ENCODE measurements at regions of chr20 and their contacts with region 1.

Region 1: DNA sequence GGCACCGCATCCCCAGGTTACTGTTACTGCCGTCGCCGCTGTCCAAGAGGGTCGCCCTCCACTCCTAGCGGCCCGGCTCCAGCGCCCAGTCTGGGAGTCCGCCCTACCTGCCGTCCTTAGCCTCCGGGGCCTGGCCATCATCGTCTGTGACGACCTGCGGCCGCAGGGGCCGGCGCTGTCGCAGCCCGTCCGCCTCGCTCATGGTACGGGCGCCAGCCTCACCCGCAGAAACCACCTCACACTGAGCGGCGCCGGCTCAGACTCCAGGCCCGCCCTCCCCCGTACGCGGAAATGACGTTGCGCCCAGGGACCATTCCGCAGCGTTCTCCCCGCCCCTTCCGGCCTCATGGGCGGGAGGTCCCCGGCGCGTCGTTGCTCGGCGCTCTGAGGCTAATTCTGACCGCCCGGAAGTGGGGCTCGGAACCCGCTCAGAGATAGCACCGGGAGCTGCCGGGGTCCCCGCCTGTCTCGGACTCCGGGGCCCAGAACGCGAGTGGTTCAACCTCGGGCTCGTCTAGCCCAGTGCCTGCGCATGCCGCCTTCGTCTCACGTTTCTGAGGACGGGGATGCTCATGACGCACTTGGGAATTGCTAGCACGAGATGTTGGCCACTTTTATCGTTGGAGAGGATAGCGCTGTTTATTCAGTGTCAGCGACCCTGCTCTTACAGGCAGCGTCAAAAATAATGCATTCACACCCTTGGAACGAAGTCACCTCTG is at the start of gene APMAP:
- DNase-seq: peak; percentile 96 to 98 (median 96)
- H3K4me3 ChIP-seq: peak within 1 kb of the TSS; percentile 93
- H3K27ac ChIP-seq: peak within 1 kb of the TSS; percentile 54 to 92
- H3K4me1 ChIP-seq: peaks cover 3% of the 10 kb centered on the region
- H3K27me3 ChIP-seq: no peaks in the 10 kb centered on the region
- CTCF ChIP-seq: no peak
- EP300 ChIP-seq: no peak
- POLR2A ChIP-seq: peak; percentile 96
- total RNA-seq, gene APMAP: 23.5 to 59.0 (median 45.3) TPM

Region 2: DNA sequence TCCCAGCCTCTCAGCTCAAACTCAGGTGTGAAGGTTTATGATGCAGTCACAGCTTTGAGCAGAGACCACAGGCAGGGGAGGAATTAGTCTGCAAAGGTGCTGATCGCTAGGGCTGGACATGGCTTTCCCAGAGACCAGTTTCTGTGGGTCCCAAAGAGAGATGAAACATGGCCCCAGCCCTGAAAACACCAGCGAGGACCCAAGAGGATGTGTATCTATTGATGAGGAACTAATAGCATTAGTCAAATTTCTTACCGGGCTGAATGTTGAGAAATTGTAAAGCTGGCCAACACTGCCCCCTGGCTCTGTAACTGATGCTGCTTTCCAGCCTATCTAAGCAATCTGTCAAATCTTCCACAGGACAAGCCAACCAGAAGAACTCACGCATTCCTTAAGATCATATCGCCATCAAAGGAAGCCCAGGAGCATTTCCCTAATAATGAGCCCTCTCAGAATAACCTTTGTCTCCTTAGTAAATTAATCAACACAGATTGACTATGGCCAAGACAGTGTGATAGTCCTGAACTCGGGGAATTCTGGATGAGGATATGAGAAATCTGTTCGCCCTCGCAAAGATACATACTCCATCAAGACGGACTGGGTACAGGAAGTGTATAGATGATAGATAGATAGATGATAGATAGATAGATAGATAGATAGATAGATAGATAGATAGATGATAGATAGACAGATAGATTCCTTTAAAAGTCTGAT is 73.1 kb after region 1 on chr20:
- intact Hi-C with region 1: loop called in 3 of 4 experiments (anchors 1 to 2 kb)
- DNase-seq: peak; percentile 46 to 74 (median 63)
- H3K4me3 ChIP-seq: no peak overlapping the region
- H3K27ac ChIP-seq: no peak overlapping the region
- H3K4me1 ChIP-seq: no peaks in the 10 kb centered on the region
- H3K27me3 ChIP-seq: no peaks in the 10 kb centered on the region
- CTCF ChIP-seq: peak; percentile 53 to 88 (median 82)
- EP300 ChIP-seq: no peak
- POLR2A ChIP-seq: no peak

Region 3: GRCh38 chr20:25195014-25195961 is 202.6 kb after region 1 on chr20 and contains the start of gene ENTPD6:
- intact Hi-C with region 1: loop called in 2 of 4 experiments (anchors 5 to 10 kb)
- DNase-seq: peak; percentile 92 to 98 (median 96)
- H3K4me3 ChIP-seq: peak within 1 kb of the TSS; percentile 77
- H3K27ac ChIP-seq: peak within 1 kb of the TSS; percentile 58 to 75
- H3K4me1 ChIP-seq: peaks cover 22% of the 10 kb centered on the region
- H3K27me3 ChIP-seq: no peaks in the 10 kb centered on the region
- CTCF ChIP-seq: no peak
- EP300 ChIP-seq: no peak
- POLR2A ChIP-seq: peak; percentile 82
- total RNA-seq, gene ENTPD6: 34.9 to 73.8 (median 66.5) TPM

Region 4: DNA sequence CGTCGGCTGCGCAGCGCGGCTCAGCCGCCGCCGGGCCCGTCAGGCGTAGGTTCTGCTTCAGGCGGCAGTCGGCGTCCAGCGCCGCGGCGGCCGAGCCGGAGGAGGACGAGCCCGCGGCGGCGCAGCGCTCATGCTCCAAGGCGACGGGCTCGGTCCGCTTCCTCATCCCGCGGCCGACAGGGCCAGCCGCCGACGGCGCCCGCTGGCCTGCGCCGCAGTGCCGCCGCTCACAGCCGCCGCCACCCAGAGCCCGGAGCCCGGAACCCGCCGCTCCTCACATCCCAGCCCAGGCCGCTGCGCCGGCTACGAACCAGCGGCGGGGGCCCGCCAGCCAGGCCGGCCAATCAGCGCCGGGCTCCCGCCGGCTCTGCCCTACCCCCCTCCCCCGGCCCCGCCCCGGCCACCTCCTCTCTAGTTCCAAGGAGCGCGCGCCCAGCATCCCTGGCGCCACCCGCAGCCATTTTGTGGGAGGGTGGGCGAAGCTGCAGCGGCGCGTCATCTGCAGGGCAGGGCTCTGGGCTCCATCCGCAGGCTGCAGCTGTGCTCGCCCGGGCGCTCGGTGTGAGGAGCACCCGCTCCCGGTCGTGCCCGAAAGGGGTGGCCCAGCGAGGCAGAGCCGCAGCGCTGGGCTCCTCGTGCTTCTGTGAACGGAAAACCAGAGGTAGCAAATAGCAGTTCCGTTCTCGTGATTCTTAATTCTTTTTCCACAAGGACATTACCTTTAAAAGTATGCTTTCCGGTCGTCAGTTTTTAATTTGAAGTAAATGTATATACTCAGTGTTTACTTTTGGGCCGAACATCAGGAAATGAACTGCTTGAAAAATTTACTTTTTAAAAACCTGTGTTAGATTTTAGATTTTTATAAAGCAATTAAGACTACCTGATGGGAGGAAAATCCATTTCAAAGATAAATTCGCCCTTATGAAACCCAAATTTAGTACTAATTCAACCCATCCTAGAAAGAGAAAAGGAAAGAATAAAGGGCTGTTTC is 398.2 kb after region 1 on chr20 and contains the start of gene ABHD12:
- intact Hi-C with region 1: loop called in 1 of 4 experiments (anchors 2 kb)
- DNase-seq: peak; percentile 93 to 96 (median 94)
- H3K4me3 ChIP-seq: peak within 1 kb of the TSS; percentile 81
- H3K27ac ChIP-seq: peak within 1 kb of the TSS; percentile 59 to 90
- H3K4me1 ChIP-seq: peaks cover 3% of the 10 kb centered on the region
- H3K27me3 ChIP-seq: no peaks in the 10 kb centered on the region
- CTCF ChIP-seq: peak in 1 of 3 donors; percentile 11
- EP300 ChIP-seq: no peak
- POLR2A ChIP-seq: peak; percentile 25
- total RNA-seq, gene ABHD12: 15.0 to 46.9 (median 37.6) TPM

Region 5: DNA sequence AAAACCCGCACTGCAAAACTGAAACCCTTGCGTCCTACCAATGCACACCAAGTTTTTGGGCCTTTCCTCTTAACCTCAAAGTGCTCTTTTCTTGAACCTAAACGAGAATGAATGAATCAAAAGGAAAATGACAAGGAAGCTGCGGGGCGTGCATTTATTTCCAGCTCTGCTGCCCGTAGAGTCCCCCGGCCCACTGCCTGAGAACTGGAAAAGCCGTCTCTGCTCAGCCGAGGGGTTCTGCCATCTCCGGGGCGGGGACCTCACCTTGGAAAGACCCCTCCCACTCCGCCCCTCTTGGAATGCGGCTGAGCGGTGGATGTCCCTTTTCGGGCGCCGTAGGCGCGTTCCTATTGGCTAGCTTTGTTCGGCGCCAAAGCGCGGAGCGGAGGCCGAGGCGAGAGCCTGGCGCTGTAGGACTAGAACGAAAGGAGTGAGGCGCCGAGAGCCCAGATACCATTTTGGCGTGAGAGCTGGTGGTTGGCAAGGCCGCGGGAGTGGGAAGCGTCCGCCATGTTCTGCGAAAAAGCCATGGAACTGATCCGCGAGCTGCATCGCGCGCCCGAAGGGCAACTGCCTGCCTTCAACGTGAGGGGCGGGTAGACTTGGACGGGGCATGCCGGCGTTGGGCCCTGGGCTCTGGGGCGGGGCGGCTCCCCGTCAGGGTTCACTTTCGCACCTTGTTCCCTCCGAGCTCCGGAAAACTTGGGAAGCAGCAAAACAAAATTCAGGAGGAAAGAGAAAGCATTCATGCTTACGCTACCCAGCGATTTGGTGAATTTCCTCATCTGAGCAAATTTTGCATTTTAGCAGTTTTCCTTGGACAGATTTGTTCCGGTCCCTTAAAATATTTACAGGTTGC is 414.9 kb after region 1 on chr20 and contains the start of gene GINS1:
- intact Hi-C with region 1: loop called in 2 of 4 experiments (anchors 5 to 10 kb)
- DNase-seq: peak; percentile 70 to 89 (median 83)
- H3K4me3 ChIP-seq: peak within 1 kb of the TSS; percentile 48
- H3K27ac ChIP-seq: no peak within 1 kb of the TSS
- H3K4me1 ChIP-seq: no peaks in the 10 kb centered on the region
- H3K27me3 ChIP-seq: no peaks in the 10 kb centered on the region
- CTCF ChIP-seq: no peak
- EP300 ChIP-seq: no peak
- POLR2A ChIP-seq: no peak
- total RNA-seq, gene GINS1: 0.69 to 2.7 (median 1.8) TPM in 6 of 7 donors, not detected in the other